Right cardiac atrium (tissue), 5 donors: ENCODE measurements at regions of chr9 and their contacts with region 1.

Region 1: GRCh38 chr9:72149231-72149975 is at the start of gene GDA:
- DNase-seq: peak in 2 of 3 donors; percentile 39
- ATAC-seq: peak in 1 of 2 donors; percentile 52
- H3K4me3 ChIP-seq: peak within 1 kb of the TSS; percentile 0
- H3K27ac ChIP-seq: no peak within 1 kb of the TSS
- H3K4me1 ChIP-seq: no peaks in the 10 kb centered on the region
- H3K27me3 ChIP-seq: no peaks in the 10 kb centered on the region
- total RNA-seq, gene GDA: 0.14 to 0.35 TPM in 2 of 4 donors, not detected in the others

Region 2: GRCh38 chr9:72210522-72210921 is 61.1 kb after region 1 on chr9:
- intact Hi-C with region 1: loop called in 1 of 4 experiments (anchors 10 kb)
- DNase-seq: no peak
- ATAC-seq: no peak
- H3K4me3 ChIP-seq: no peak overlapping the region
- H3K27ac ChIP-seq: no peak overlapping the region
- H3K4me1 ChIP-seq: no peaks in the 10 kb centered on the region
- H3K27me3 ChIP-seq: no peaks in the 10 kb centered on the region